Right lobe of liver (tissue), 6 donors: ENCODE measurements at regions of chr1 and their contacts with region 1.

Region 1: DNA sequence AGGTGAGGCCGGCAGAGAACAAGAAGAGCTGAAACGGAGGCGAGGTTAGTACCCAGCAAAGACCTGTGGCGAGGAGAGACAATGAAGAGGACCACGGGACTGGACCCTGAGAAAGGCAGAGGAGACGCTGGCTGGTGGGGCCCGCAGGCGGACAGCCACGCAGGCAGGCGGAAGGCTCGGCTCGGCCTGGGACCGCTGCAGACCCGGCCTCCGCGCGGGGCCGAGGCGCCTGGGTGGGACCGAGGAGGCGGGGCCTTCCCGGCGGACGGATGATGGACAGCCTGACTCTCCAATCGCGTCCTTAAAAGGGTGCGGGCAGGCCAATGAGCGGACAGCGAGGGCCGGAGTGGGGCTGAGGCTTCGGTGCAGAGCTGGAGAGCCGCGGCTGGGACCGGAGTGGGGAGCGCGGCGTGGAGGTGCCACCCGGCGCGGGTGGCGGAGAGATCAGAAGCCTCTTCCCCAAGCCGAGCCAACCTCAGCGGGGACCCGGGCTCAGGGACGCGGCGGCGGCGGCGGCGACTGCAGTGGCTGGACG is at the start of gene MPZL1:
- DNase-seq: peak; percentile 97 to 98 (median 98)
- ATAC-seq: peak; percentile 95 to 99 (median 98)
- H3K4me3 ChIP-seq: peak within 1 kb of the TSS; percentile 86 to 95 (median 94)
- H3K27ac ChIP-seq: peak within 1 kb of the TSS; percentile 66 to 86 (median 69)
- H3K4me1 ChIP-seq: peaks cover 0 to 21% (median 3%) of the 10 kb centered on the region in 4 donors
- H3K27me3 ChIP-seq: no peaks in the 10 kb centered on the region
- CTCF ChIP-seq: no peak
- POLR2A ChIP-seq: peak; percentile 75
- total RNA-seq, gene MPZL1: 15.7 to 43.3 (median 18.9) TPM

Region 2: DNA sequence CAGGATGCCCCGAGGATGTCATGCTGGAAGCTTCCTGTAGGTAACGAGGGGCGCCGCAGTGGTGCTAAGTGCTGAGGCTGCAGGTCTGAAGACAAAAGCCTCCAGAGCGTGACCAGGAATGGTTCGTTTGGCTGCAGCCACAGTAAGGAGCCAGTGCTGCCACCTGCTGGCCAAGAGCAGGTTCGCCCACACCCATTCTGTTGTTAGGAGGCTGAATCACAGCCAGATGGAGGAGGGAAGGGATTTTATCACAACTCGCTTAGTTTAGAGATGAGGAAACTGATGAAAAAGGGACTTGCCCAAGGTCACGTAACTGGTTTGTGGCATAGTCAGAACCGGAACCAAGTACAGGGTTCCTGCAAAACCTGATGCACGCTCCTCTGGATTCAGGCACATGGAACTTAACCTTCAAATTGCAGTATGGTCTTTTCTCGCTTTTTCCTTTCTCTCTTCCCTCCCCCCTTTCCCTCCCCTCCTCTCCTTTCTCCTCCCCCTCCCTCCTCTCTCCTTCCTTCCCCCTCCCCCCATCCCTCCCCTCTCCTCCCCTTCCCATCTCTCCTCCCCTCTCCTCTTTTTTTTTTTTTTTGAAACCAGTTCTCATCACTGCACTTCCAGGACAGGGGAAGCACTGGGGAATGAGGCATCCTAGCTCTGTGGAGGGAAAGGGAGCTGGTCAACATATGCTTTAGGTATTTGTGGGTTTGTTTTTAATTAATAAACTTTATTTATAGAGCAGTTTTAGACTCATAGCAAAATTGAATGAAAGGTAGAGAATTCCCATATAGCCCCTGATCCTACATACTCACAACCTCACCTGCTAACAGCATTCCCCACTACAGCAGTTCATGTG is 81.9 kb after region 1 on chr1:
- intact Hi-C with region 1: loop called in 1 of 2 experiments (anchors 10 kb)
- DNase-seq: peak; percentile 91 to 92 (median 92)
- ATAC-seq: peak; percentile 99 to 100 (median 99)
- H3K4me3 ChIP-seq: no peak overlapping the region
- H3K27ac ChIP-seq: no peak overlapping the region
- H3K4me1 ChIP-seq: peaks cover 0 to 3% (median 0%) of the 10 kb centered on the region in 4 donors
- H3K27me3 ChIP-seq: no peaks in the 10 kb centered on the region
- CTCF ChIP-seq: peak in 3 of 4 donors; percentile 92 to 99 (median 98)
- POLR2A ChIP-seq: no peak